ENCODE measurements at regions of chr16 and their contacts with region 1.

Region 1: DNA sequence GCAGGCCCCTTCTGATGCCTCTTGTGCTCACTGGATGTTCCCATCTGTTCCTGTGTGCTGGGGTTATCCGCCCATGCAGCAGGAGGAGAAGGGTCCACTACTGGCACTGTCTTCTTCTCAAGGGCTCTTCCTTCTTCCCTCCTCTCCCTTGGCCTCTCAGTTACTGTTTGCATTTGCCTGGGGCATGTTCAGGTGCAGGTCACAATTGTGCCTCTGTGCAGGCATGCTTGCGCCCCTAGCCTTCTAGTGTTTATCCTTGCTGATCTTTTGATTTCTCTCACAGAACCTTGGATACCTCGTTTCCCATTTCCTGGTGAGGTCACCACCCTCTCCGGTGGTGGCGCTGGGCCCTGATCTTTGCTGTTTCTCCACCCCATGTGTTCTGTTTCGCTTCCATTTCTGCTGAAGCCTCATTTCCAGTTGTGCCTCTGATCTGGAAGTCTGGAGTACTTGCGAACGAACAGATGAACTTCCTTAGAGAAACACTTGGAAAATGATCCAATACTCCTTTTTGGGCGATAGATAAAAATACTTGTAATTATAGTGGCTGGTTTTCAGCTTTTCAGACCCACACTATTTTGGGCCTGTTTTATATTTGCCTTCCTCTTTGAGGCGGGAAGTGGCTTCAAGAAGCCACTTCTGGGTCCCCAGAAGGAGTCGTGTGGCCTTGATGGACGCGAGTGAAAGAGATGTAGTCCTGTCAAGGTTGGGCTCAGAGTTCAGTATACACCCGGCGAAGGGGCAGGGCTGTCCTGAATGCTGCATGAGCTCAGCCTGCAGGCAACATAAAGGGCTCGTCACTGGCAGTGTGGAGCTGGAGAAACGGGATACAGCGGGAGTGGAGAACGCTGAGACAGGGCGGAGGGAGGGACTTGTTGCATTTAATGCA is 312.9 kb downstream of the SNX29 start:
- DNase-seq: peak; percentile 89
- ATAC-seq: peak; percentile 94
- H3K4me3 ChIP-seq: peak overlapping the region; percentile 44 to 59 (median 52)
- H3K27ac ChIP-seq: peak overlapping the region; percentile 81
- H3K4me1 ChIP-seq: peaks cover 75% of the 10 kb centered on the region
- H3K27me3 ChIP-seq: no peaks in the 10 kb centered on the region
- CTCF ChIP-seq: peak; percentile 58
- EP300 ChIP-seq: peak; percentile 19 to 74; a peak in 3 of 4 replicates
- POLR2A ChIP-seq: peak; percentile 44 to 57; a peak in 3 of 4 replicates
- RAD21 ChIP-seq: peak; percentile 36; the same call in 1 of the 2 replicates

Region 2: DNA sequence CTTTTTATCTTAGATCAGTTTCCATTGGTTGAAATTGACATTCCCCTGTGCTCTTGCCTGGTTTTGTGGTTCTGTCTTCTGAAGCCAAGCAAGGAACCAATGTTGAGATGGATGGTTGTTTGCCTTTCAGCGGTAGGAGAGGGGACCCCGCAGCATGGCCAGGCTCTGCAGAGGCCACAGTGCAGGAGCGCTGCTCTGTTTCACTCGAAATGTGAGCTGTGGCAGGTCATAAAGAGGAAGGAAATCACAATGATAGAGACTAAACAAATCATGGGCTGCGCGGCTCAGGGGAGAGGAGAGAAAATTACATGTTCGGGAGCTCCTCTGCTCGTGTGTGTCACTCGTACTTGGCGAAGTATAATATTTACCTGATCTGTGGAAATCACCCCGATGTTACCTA is 164.7 kb before region 1 on chr16:
- CTCF ChIA-PET with region 1: no interaction called
- POLR2A ChIA-PET with region 1: no interaction called
- in situ Hi-C with region 1: no loop called
- intact Hi-C with region 1: no loop called
- DNase-seq: no peak
- ATAC-seq: no peak
- H3K4me3 ChIP-seq: no peak overlapping the region
- H3K27ac ChIP-seq: no peak overlapping the region
- H3K4me1 ChIP-seq: peaks cover 16% of the 10 kb centered on the region
- H3K27me3 ChIP-seq: no peaks in the 10 kb centered on the region
- CTCF ChIP-seq: no peak
- EP300 ChIP-seq: no peak
- POLR2A ChIP-seq: no peak
- RAD21 ChIP-seq: no peak

Region 3: GRCh38 chr16:12188061-12188934 is 101.1 kb before region 1 on chr16:
- CTCF ChIA-PET with region 1: no interaction called
- POLR2A ChIA-PET with region 1: no interaction called
- in situ Hi-C with region 1: no loop called
- intact Hi-C with region 1: no loop called
- DNase-seq: peak; percentile 59
- ATAC-seq: peak; percentile 73
- H3K4me3 ChIP-seq: no peak overlapping the region
- H3K27ac ChIP-seq: no peak overlapping the region
- H3K4me1 ChIP-seq: peaks cover 28% of the 10 kb centered on the region
- H3K27me3 ChIP-seq: no peaks in the 10 kb centered on the region
- CTCF ChIP-seq: no peak
- EP300 ChIP-seq: peak in 1 of 2 experiments; percentile 44; a peak in 1 of 4 replicates
- POLR2A ChIP-seq: no peak
- RAD21 ChIP-seq: no peak

Region 4: DNA sequence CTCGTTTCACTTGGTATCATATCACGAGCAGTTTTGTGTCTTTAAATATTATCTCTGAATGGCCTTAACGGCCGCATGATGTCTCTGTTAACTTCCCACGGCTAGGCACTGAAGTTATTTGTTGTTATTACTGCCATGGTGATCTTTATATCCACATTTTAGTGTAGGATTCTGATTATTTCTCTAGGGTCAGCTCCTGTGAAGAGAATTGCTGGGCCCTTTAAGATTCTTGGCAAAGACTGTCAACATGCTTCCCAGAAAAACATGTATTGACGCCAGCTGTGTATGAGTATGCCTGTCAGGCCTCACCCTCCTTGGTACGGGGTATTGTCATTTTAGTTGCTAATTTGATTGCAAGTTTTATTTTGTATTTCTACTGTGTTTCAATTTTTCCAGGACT is 49.4 kb before region 1 on chr16:
- CTCF ChIA-PET with region 1: no interaction called
- POLR2A ChIA-PET with region 1: no interaction called
- in situ Hi-C with region 1: no loop called
- intact Hi-C with region 1: no loop called
- DNase-seq: no peak
- ATAC-seq: no peak
- H3K4me3 ChIP-seq: no peak overlapping the region
- H3K27ac ChIP-seq: no peak overlapping the region
- H3K4me1 ChIP-seq: 0 out of 2 replicates have a peak, but pooled peaks cover 1% of the 10 kb centered on the region
- H3K27me3 ChIP-seq: no peaks in the 10 kb centered on the region
- CTCF ChIP-seq: no peak
- EP300 ChIP-seq: no peak
- POLR2A ChIP-seq: no peak
- RAD21 ChIP-seq: no peak

Region 5: DNA sequence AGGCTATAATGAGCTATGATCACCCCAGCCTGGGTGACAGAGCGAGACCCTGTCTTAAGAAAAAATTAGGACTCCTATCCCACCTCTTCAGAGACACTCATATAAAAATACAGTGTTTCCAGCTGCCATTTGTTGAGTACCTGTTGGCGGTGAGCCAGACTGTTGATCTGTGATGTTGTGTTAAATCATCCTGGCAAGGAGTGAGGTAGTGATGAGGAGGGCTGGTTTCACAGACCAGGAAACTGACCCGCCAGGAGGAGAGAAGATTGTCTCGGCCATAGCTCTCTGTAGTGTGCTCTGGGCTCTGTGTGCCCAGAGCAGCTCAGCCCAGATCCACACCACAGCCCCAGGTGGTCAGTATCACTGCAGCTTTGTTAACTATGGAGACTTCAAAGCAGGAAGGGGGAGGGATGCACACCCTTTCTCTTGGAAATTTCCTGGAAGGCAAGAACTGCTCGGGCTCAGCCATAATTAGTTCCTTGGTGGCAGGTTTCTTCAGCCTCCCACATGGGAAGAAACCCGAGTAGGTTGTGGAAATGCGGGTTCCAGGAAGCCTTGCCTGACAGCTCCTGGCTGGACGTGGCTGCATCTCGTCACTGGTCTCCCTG is 30.1 kb after region 1 on chr16:
- CTCF ChIA-PET with region 1: no interaction called
- POLR2A ChIA-PET with region 1: interaction called, 9 read pairs
- in situ Hi-C with region 1: no loop called
- intact Hi-C with region 1: loop called (anchors 1 kb)
- DNase-seq: no peak
- ATAC-seq: no peak
- H3K4me3 ChIP-seq: no peak overlapping the region
- H3K27ac ChIP-seq: no peak overlapping the region
- H3K4me1 ChIP-seq: peaks cover 71% of the 10 kb centered on the region
- H3K27me3 ChIP-seq: no peaks in the 10 kb centered on the region
- CTCF ChIP-seq: no peak
- EP300 ChIP-seq: no peak
- POLR2A ChIP-seq: no peak
- RAD21 ChIP-seq: no peak